A549 (cell line): ENCODE measurements at regions of chr14 and their contacts with region 1.

Region 1: GRCh38 chr14:22900081-22900799 is 17.2 kb downstream of the REM2 start:
- DNase-seq: peak; percentile 77 to 81
- ATAC-seq: peak; percentile 81 to 83
- H3K4me3 ChIP-seq: no peak overlapping the region
- H3K27ac ChIP-seq: no peak overlapping the region; a peak in 1 of 6 replicates
- H3K4me1 ChIP-seq: peaks cover 17% of the 10 kb centered on the region
- CTCF ChIP-seq: peak; percentile 72
- EP300 ChIP-seq: no peak
- POLR2A ChIP-seq: no peak
- RAD21 ChIP-seq: peak; percentile 62 to 70

Region 2: DNA sequence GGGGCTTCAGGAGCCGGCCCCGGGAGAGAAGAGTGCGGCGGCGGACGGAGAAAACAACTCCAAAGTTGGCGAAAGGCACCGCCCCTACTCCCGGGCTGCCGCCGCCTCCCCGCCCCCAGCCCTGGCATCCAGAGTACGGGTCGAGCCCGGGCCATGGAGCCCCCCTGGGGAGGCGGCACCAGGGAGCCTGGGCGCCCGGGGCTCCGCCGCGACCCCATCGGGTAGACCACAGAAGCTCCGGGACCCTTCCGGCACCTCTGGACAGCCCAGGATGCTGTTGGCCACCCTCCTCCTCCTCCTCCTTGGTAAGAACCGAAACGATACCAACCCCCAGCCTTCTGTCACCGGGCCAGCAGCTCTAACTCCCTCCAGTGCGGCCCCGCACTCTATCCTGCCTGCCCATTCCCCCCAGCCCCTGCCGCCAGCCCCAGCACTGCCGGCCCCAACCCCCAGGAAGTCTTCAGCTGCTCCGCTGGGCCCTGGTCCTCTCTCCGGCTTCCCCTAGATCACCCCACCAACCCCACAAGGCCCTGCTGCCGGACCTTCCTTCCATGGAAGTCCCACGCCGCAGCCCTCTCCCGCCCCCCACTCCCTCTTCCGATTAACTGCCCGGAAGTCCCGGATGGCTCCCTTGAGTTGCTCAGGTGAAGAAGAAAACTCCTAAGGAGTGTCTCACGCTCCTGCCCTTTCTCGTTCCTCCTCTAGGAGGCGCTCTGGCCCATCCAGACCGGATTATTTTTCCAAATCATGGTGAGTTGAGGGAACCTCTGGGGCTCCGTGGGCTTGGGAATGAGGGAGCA is 28.0 kb before region 1 on chr14:
- CTCF ChIA-PET with region 1: interaction called, 368 read pairs
- POLR2A ChIA-PET with region 1: interaction called, 4 read pairs
- DNase-seq: peak; percentile 87 to 90
- ATAC-seq: peak; percentile 72 to 82
- H3K4me3 ChIP-seq: peak overlapping the region; percentile 78
- H3K27ac ChIP-seq: peak overlapping the region; percentile 94 to 98
- H3K4me1 ChIP-seq: peaks cover 21% of the 10 kb centered on the region
- CTCF ChIP-seq: peak; percentile 91
- EP300 ChIP-seq: no peak
- POLR2A ChIP-seq: 0 out of 2 replicates have a peak, but pooled peaks have one; percentile 24
- RAD21 ChIP-seq: peak; percentile 69 to 75

Region 3: DNA sequence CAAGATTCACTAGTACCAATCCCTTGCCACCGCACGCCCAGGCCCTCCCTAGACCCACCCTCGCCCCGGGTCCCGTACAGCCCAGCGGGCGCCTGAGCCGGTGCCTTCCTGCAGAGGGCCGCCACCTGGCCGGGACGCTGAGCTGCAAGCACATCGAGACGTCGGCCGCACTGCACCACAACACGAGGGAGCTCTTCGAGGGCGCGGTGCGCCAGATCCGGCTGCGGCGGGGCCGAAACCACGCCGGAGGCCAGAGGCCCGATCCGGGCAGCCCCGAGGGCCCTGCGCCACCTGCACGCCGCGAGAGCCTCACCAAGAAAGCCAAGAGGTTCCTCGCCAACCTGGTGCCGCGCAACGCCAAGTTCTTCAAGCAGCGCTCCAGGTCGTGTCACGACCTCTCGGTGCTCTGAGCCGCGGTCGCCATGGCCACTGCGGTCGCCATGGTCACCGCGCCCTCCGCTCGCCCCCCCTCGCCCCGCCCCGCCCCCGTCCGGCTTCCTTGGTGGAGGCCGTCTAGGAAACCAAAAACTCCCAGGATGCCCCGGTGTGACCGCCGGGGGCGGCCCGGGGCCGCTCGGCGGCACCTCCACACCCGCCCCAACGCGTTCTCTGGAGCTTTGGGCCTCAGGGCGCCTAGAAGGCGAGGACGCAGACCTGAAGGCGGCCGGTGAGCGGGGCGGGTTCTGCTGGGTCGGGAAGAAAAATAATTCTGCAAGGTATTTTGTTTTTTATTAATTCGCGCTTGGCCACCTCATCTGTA is 13.6 kb before region 1 on chr14:
- CTCF ChIA-PET with region 1: interaction called, 368 read pairs
- POLR2A ChIA-PET with region 1: interaction called, 10 read pairs
- DNase-seq: peak; percentile 66 to 73
- ATAC-seq: peak; percentile 78 to 80
- H3K4me3 ChIP-seq: peak overlapping the region; percentile 61
- H3K27ac ChIP-seq: peak overlapping the region; percentile 87 to 93
- H3K4me1 ChIP-seq: peaks cover 18% of the 10 kb centered on the region
- CTCF ChIP-seq: no peak
- EP300 ChIP-seq: no peak
- POLR2A ChIP-seq: peak; percentile 65
- RAD21 ChIP-seq: no peak

Region 4: GRCh38 chr14:22918804-22919600 is 18.8 kb after region 1 on chr14 and contains the start of gene RBM23:
- CTCF ChIA-PET with region 1: interaction called, 118 read pairs
- POLR2A ChIA-PET with region 1: interaction called, 6 read pairs
- DNase-seq: peak; percentile 95 to 100
- ATAC-seq: peak; percentile 96 to 98
- H3K4me3 ChIP-seq: peak within 1 kb of the TSS; percentile 71
- H3K27ac ChIP-seq: peak within 1 kb of the TSS; percentile 87 to 92
- H3K4me1 ChIP-seq: peaks cover 18% of the 10 kb centered on the region
- CTCF ChIP-seq: no peak
- EP300 ChIP-seq: no peak
- POLR2A ChIP-seq: peak; percentile 75
- RAD21 ChIP-seq: no peak
- polyA plus RNA-seq, gene RBM23: 68.0 and 71.7 TPM in 2 replicates